Natural killer cell (primary cell): ENCODE measurements at regions of chr18 and their contacts with region 1.

Region 1: DNA sequence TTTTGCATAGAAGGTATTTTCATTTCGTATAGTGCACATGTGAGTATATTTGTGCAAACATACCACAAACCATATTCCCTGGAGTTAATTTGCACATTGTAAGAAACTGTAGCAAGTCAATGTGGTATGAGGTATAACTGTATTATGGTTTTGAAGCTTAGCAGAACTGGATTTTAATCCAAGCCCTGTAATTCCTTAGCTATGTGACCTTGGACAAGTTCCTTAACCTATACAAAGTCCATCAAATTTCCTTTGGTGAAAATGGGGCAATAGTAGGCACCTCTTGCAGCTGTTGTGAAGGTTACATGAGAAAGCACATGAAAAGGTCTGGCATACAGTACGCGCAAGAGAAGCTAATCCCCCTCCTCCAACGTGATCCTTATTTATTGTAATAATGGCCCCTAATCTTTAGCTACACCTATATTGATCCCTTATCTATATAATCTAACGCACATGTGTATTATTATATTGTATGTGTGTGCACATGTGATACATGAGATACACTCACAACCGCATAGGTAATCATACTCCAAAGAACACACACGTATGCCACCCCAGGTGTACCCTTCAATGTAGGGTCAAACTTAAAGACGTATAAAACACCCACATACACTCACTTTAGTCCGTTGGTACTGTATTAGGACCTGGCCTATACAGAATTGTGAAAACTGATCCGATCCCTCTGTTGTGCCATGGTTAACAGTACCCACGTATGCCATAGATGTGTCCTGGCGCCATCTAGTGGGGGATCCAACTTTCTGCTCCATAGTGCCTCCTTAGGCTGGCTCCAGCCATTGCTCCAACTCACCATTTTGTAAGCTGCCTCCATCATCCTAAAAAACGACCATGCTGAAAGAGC is 402.9 kb upstream of the SLC14A2 start:
- DNase-seq: peak; percentile 73 to 85
- ATAC-seq: peak; percentile 96 to 100 (median 100)
- H3K4me3 ChIP-seq: no peak overlapping the region
- H3K4me3 Mint-ChIP-seq: no peak overlapping the region
- H3K27ac ChIP-seq: no peak overlapping the region
- H3K27ac Mint-ChIP-seq: no peak overlapping the region
- H3K4me1 ChIP-seq: no peaks in the 10 kb centered on the region
- H3K4me1 Mint-ChIP-seq: peaks cover 5% of the 10 kb centered on the region in 2 donors
- H3K27me3 ChIP-seq: no peaks in the 10 kb centered on the region
- H3K27me3 Mint-ChIP-seq: peaks cover 0 to 10% of the 10 kb centered on the region in 2 donors
- CTCF ChIP-seq: peak; percentile 99

Region 2: GRCh38 chr18:43620936-43621335 is 1591.5 kb before region 1 on chr18:
- intact Hi-C with region 1: loop called (anchors 2 kb)
- DNase-seq: peak in 1 of 2 donors; percentile 22
- ATAC-seq: peak in 1 of 3 donors; percentile 54
- H3K4me3 ChIP-seq: no peak overlapping the region
- H3K4me3 Mint-ChIP-seq: no peak overlapping the region
- H3K27ac ChIP-seq: no peak overlapping the region
- H3K27ac Mint-ChIP-seq: no peak overlapping the region
- H3K4me1 ChIP-seq: no peaks in the 10 kb centered on the region
- H3K4me1 Mint-ChIP-seq: no peaks in the 10 kb centered on the region
- H3K27me3 ChIP-seq: no peaks in the 10 kb centered on the region
- H3K27me3 Mint-ChIP-seq: no peaks in the 10 kb centered on the region
- CTCF ChIP-seq: peak; percentile 49

Region 3: GRCh38 chr18:44130376-44130942 is 1082.0 kb before region 1 on chr18:
- intact Hi-C with region 1: loop called (anchors 2 kb)
- DNase-seq: peak in 1 of 2 donors; percentile 16
- ATAC-seq: peak; percentile 40 to 68 (median 50)
- H3K4me3 ChIP-seq: no peak overlapping the region
- H3K4me3 Mint-ChIP-seq: no peak overlapping the region
- H3K27ac ChIP-seq: no peak overlapping the region
- H3K27ac Mint-ChIP-seq: no peak overlapping the region
- H3K4me1 ChIP-seq: no peaks in the 10 kb centered on the region
- H3K4me1 Mint-ChIP-seq: peaks cover 0 to 5% of the 10 kb centered on the region in 2 donors
- H3K27me3 ChIP-seq: no peaks in the 10 kb centered on the region
- H3K27me3 Mint-ChIP-seq: peaks cover 2 to 33% of the 10 kb centered on the region in 2 donors
- CTCF ChIP-seq: peak; percentile 57

Region 4: DNA sequence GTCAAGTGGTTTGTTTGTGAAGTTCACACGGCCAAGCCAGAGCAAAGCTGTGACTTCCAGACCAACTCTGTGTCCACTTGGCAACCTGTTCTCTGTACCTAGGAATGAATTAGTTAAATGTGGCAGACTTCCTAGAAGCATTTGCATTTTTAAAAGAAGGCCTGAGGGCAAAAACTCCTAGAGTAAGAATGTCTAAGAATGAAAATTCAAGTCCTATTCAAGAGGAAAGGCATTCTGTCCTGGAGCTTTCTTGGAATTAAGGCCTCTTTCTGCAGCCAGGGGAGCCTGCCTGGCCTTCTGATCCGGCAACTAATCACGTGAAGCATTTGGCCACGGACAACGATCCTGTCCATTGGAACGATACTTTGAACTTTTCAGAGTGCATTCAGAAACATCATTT is 376.7 kb before region 1 on chr18:
- intact Hi-C with region 1: no loop called
- DNase-seq: no peak
- ATAC-seq: no peak
- H3K4me3 ChIP-seq: no peak overlapping the region
- H3K4me3 Mint-ChIP-seq: no peak overlapping the region
- H3K27ac ChIP-seq: no peak overlapping the region
- H3K27ac Mint-ChIP-seq: no peak overlapping the region
- H3K4me1 ChIP-seq: peaks cover 16% of the 10 kb centered on the region
- H3K4me1 Mint-ChIP-seq: peaks cover 52 to 68% of the 10 kb centered on the region in 2 donors
- H3K27me3 ChIP-seq: no peaks in the 10 kb centered on the region
- H3K27me3 Mint-ChIP-seq: no peaks in the 10 kb centered on the region
- CTCF ChIP-seq: no peak

Region 5: DNA sequence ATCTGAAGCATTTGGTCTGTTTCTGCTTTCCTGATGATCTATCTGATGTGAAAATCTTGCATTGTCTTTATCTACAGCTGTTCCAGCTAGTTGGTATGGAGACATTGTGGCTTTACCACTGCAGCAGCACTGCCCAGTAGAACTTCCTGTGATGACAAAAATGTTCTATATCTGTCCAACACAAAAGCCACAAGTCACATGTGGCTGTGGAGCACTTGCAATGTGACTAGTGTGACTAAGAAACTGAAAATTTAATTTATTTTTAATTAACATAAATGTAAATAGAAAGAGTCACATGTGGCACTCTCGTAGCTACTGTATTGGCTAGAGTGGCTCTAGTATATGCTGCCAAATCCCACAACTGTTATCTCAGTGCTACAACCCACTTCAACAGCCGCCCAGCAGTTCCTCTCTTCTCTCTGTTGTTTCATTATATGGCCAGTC is 106.1 kb before region 1 on chr18:
- intact Hi-C with region 1: loop called (anchors 5 kb)
- DNase-seq: peak; percentile 48 to 59
- ATAC-seq: peak; percentile 84 to 94 (median 92)
- H3K4me3 ChIP-seq: no peak overlapping the region
- H3K4me3 Mint-ChIP-seq: no peak overlapping the region
- H3K27ac ChIP-seq: peak overlapping the region; percentile 42
- H3K27ac Mint-ChIP-seq: no peak overlapping the region
- H3K4me1 ChIP-seq: peaks cover 35% of the 10 kb centered on the region
- H3K4me1 Mint-ChIP-seq: peaks cover 35 to 49% of the 10 kb centered on the region in 2 donors
- H3K27me3 ChIP-seq: no peaks in the 10 kb centered on the region
- H3K27me3 Mint-ChIP-seq: peaks cover 14 to 34% of the 10 kb centered on the region in 2 donors
- CTCF ChIP-seq: no peak